Thyroid gland (tissue), 4 donors: ENCODE measurements at regions of chr13 and their contacts with region 1.

Region 1: DNA sequence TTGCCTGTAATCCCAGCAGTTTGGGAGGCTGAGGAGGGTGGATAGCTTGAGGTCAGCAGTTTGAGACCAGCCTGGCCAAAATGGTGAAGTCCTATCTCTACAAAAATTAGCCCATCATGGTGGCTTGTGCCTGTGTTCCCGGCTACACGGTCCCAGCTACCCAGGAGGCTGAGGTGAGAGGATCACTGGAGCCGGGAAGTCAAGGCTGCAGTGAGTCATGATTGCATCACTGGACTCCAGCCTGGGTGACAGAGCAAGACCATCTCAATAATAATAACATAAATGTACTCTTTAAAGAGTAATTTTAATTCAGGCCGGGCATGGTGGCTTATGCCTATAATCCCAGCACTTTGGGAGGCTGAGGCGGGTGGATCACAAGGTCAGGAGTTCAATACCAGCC is 38.7 kb downstream of the SKA3 start:
- DNase-seq: no peak
- H3K4me3 ChIP-seq: no peak overlapping the region
- H3K27ac ChIP-seq: no peak overlapping the region
- H3K4me1 ChIP-seq: peaks cover 14 to 17% of the 10 kb centered on the region in 2 donors
- H3K27me3 ChIP-seq: no peaks in the 10 kb centered on the region
- CTCF ChIP-seq: no peak
- POLR2A ChIP-seq: no peak

Region 2: GRCh38 chr13:20703780-20704445 is 433.8 kb before region 1 on chr13:
- intact Hi-C with region 1: loop called (anchors 5 kb)
- DNase-seq: peak; percentile 89 to 90
- H3K4me3 ChIP-seq: peak overlapping the region in 1 of 3 donors; percentile 28
- H3K27ac ChIP-seq: peak overlapping the region in 1 of 3 donors; percentile 41
- H3K4me1 ChIP-seq: peaks cover 3 to 8% of the 10 kb centered on the region in 2 donors
- H3K27me3 ChIP-seq: no peaks in the 10 kb centered on the region
- CTCF ChIP-seq: peak in 4 of 6 experiments; percentile 22 to 90 (median 82)
- POLR2A ChIP-seq: peak; percentile 12 to 78

Region 3: GRCh38 chr13:20945952-20946383 is 191.7 kb before region 1 on chr13:
- intact Hi-C with region 1: loop called (anchors 10 kb)
- DNase-seq: peak; percentile 7 to 9
- H3K4me3 ChIP-seq: no peak overlapping the region
- H3K27ac ChIP-seq: no peak overlapping the region
- H3K4me1 ChIP-seq: peaks cover 0 to 10% of the 10 kb centered on the region in 2 donors
- H3K27me3 ChIP-seq: no peaks in the 10 kb centered on the region
- CTCF ChIP-seq: no peak
- POLR2A ChIP-seq: no peak

Region 4: DNA sequence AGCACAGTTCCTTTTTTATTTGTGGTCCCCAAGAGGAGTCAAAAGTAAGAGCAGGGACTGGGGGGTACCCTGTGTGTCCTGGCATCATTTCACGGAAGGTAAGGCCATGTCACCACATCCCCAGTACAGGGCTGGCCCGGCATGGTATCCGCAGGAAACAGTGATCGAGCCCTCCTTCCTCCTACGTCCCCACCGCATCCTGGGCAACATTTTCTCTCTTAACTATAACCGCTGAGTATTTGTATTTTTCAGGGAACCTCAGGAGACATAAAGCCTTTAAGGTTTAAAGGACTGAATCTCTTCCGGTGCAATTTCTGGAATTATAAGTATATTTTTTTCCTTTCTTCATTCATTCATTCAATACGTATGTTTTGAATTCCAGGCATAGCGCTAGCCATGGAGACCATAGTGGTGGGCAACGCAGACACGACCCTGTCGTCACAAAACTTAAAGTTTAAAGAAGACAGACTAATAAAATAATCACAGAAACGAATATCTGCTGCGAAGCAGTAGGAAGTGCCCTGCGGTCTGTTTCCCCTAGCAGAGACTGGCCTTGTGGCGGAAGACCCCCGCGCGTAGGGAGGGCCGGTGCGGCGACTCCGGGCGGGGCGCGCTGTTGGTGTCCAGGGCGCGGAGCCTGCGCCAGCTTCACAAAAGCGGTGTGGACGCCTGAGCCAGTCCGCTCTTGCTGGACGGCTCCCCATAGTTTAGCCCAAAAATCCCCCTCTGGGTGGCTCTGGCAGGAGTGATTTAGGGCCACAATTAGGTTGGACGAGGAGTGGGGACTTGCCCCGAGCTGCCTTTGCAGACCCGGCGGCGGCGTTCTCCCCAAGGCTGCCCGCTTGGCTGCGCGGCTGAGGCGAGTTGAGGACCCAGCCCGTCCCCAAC is 62.4 kb before region 1 on chr13:
- intact Hi-C with region 1: loop called (anchors 10 kb)
- DNase-seq: peak; percentile 57 to 68
- H3K4me3 ChIP-seq: peak overlapping the region in 2 of 3 donors; percentile 40 to 46
- H3K27ac ChIP-seq: peak overlapping the region; percentile 31 to 77 (median 40)
- H3K4me1 ChIP-seq: peaks cover 0 to 13% of the 10 kb centered on the region in 2 donors
- H3K27me3 ChIP-seq: no peaks in the 10 kb centered on the region
- CTCF ChIP-seq: no peak
- POLR2A ChIP-seq: no peak

Region 5: DNA sequence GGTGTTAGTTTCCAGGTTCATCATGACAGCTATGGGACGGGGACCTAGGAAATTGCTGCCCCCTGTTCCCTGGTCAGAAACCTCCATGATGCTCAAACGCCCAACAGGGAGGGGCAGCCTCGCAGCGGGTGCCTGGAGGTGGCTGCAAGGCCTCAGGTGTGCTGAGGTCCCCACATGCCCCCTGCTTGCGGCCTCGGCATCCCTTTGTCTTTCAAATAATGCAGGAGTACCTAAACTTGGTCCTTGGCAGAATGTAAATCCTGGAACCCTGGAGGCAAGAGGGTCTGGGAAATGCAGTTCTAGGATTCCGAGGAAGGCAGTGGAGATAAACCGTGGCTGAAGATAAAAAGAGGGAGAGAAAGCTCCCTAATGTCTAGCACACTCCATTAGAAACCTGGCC is 13.7 kb before region 1 on chr13:
- intact Hi-C with region 1: no loop called
- DNase-seq: no peak
- H3K4me3 ChIP-seq: no peak overlapping the region
- H3K27ac ChIP-seq: no peak overlapping the region
- H3K4me1 ChIP-seq: no peaks in the 10 kb centered on the region
- H3K27me3 ChIP-seq: no peaks in the 10 kb centered on the region
- CTCF ChIP-seq: no peak
- POLR2A ChIP-seq: no peak